Endothelial cell of umbilical vein (primary cell): ENCODE measurements at regions of chr1 and their contacts with region 1.

Region 1: GRCh38 chr1:225318706-225319575 is 108.9 kb downstream of the LBR start:
- DNase-seq: peak; percentile 38
- H3K4me3 ChIP-seq: no peak overlapping the region
- H3K27ac ChIP-seq: no peak overlapping the region
- H3K4me1 ChIP-seq: no peaks in the 10 kb centered on the region
- H3K27me3 ChIP-seq: no peaks in the 10 kb centered on the region
- CTCF ChIP-seq: peak; percentile 66 to 69
- POLR2A ChIP-seq: no peak

Region 2: DNA sequence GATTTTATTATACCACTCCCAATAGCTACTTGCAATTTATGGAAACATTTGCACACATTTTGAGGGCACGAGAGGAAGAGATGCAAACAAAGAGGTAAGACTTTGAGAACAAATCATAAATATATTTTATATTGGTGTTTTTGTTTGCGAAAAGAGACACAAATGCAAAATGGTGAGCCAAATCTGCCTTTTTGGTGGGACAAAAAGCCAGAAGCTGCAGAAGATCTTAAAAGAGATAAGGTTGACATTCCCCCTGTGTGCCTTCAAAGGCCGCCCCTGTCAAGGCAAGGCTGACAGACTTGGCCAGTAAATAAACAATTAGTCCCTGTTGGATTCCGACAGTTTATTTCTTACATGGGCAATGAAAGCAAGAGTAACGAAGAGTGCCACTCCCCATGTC is 13.9 kb before region 1 on chr1:
- CTCF ChIA-PET with region 1: interaction called, 33 read pairs
- POLR2A ChIA-PET with region 1: no interaction called
- dilution Hi-C with region 1: no loop called
- intact Hi-C with region 1: no loop called
- DNase-seq: no peak
- H3K4me3 ChIP-seq: no peak overlapping the region
- H3K27ac ChIP-seq: no peak overlapping the region
- H3K4me1 ChIP-seq: no peaks in the 10 kb centered on the region
- H3K27me3 ChIP-seq: peaks cover 0 to 1% of the 10 kb centered on the region in 2 experiments
- CTCF ChIP-seq: no peak
- POLR2A ChIP-seq: no peak

Region 3: GRCh38 chr1:225338545-225338944 is 19.6 kb after region 1 on chr1:
- CTCF ChIA-PET with region 1: interaction called, 55 read pairs
- POLR2A ChIA-PET with region 1: no interaction called
- dilution Hi-C with region 1: no loop called
- intact Hi-C with region 1: loop called (anchors 1 kb)
- DNase-seq: no peak
- H3K4me3 ChIP-seq: no peak overlapping the region
- H3K27ac ChIP-seq: no peak overlapping the region
- H3K4me1 ChIP-seq: no peaks in the 10 kb centered on the region
- H3K27me3 ChIP-seq: no peaks in the 10 kb centered on the region
- CTCF ChIP-seq: no peak
- POLR2A ChIP-seq: no peak

Region 4: DNA sequence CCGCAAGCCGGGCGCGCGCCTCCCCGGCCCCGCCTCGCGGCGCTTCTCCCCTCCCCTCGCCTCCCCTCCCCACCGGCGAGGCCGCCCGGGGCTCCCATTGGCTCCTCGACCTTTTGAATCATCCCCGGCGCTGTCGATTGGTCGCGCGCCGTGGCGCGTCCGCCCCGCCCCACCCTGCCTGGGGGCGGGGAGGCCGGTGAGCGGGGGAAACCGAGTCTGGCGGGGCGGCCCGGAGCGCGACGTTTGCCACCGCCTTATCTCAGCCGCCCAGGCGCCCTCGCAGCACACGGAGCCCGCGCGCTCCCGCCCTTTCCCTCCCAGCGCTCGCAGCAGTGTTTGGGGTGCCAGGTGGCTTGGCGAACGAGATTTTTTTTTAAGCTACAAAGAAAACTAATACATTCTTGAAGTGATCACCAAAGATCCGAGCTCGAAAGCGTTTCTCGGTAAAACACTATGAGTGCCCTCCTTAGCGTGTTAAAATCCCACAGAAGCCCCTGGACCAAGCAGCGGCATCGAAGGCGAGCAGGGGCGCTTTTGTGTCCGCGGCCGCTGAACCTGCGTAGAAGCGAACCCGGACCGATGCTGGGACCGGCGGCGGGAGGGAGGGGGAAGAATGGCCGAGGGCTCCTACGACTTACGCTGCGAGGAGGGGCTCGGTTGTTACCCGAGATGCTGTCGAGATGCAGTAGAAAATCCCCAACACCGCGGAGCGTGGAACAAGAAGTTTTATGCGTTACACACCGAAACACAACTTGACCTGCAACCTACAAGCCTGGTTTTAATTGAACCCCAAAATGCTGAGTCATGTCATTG is 109.3 kb after region 1 on chr1:
- CTCF ChIA-PET with region 1: interaction called, 4 read pairs
- POLR2A ChIA-PET with region 1: no interaction called
- dilution Hi-C with region 1: no loop called
- intact Hi-C with region 1: loop called (anchors 5 kb)
- DNase-seq: peak; percentile 90
- H3K4me3 ChIP-seq: peak overlapping the region; percentile 37 to 79 (median 68)
- H3K27ac ChIP-seq: peak overlapping the region; percentile 75
- H3K4me1 ChIP-seq: peaks cover 39% of the 10 kb centered on the region
- H3K27me3 ChIP-seq: peaks cover 0 to 1% of the 10 kb centered on the region in 2 experiments
- CTCF ChIP-seq: no peak
- POLR2A ChIP-seq: peak; percentile 23

Region 5: GRCh38 chr1:225460737-225461562 is 142.0 kb after region 1 on chr1:
- CTCF ChIA-PET with region 1: interaction called, 11 read pairs
- POLR2A ChIA-PET with region 1: no interaction called
- dilution Hi-C with region 1: no loop called
- intact Hi-C with region 1: no loop called
- DNase-seq: no peak
- H3K4me3 ChIP-seq: no peak overlapping the region
- H3K27ac ChIP-seq: no peak overlapping the region
- H3K4me1 ChIP-seq: peaks cover 10% of the 10 kb centered on the region
- H3K27me3 ChIP-seq: no peaks in the 10 kb centered on the region
- CTCF ChIP-seq: no peak
- POLR2A ChIP-seq: no peak

Region 6: DNA sequence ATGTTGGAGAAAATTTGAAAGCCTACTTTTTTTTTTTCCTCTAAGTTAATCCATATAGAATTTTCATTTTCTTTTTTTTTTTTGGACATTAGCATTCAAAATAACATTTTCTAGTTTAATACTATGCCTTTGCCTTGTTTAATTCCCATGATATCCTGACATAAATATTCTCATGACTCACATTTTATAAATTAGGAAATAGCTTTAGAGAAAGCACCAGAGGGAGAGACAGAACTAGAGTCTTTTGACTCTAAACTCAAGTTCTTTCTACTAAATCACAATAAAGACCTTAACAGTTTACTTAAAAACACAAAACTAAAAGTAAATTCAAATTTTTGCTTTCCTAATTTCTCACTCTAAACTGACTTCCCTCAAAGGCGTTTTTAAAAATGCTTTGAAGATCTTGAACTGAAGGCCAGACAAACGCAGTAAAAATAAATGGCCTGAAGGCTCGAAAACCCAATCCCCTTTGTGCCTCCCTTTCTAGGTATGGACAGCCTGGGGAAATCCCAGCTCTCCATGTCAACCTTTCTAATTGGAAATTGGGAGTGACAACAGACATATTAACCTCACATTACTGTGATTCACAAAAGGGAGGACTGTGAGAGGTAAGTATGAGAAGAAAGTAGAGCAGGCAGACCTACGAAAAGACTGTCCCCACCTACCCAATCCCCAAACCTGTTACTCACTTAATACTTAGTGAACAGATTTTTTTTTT is 229.4 kb after region 1 on chr1:
- CTCF ChIA-PET with region 1: no interaction called
- POLR2A ChIA-PET with region 1: no interaction called
- dilution Hi-C with region 1: no loop called
- intact Hi-C with region 1: no loop called
- DNase-seq: no peak
- H3K4me3 ChIP-seq: no peak overlapping the region
- H3K27ac ChIP-seq: no peak overlapping the region
- H3K4me1 ChIP-seq: no peaks in the 10 kb centered on the region
- H3K27me3 ChIP-seq: no peaks in the 10 kb centered on the region
- CTCF ChIP-seq: no peak
- POLR2A ChIP-seq: no peak